ENCODE measurements at regions of chr12 and their contacts with region 1.

Region 1: GRCh38 chr12:122752464-122753318 is at the start of gene DENR:
- DNase-seq: peak; percentile 93
- ATAC-seq: peak; percentile 92
- H3K4me3 ChIP-seq: peak within 1 kb of the TSS; percentile 67 to 89 (median 86)
- H3K27ac ChIP-seq: peak within 1 kb of the TSS; percentile 65
- H3K4me1 ChIP-seq: peaks cover 44% of the 10 kb centered on the region
- H3K27me3 ChIP-seq: no peaks in the 10 kb centered on the region; a peak in 1 of 5 replicates
- CTCF ChIP-seq: peak; percentile 99
- EP300 ChIP-seq: no peak
- POLR2A ChIP-seq: peak; percentile 84 to 92
- RAD21 ChIP-seq: peak; percentile 99
- total RNA-seq, gene DENR: 59.1 and 78.9 TPM in 2 replicates

Region 2: GRCh38 chr12:122090759-122091515 is 661.8 kb before region 1 on chr12:
- CTCF ChIA-PET with region 1: no interaction called
- POLR2A ChIA-PET with region 1: no interaction called
- in situ Hi-C with region 1: no loop called
- intact Hi-C with region 1: no loop called
- DNase-seq: no peak
- ATAC-seq: no peak
- H3K4me3 ChIP-seq: no peak overlapping the region
- H3K27ac ChIP-seq: no peak overlapping the region
- H3K4me1 ChIP-seq: peaks cover 26% of the 10 kb centered on the region
- H3K27me3 ChIP-seq: no peaks in the 10 kb centered on the region
- CTCF ChIP-seq: no peak
- EP300 ChIP-seq: no peak
- POLR2A ChIP-seq: no peak
- RAD21 ChIP-seq: no peak

Region 3: GRCh38 chr12:122526683-122527477 is 225.8 kb before region 1 on chr12 and contains the starts of genes KNTC1 and RSRC2:
- CTCF ChIA-PET with region 1: no interaction called
- POLR2A ChIA-PET with region 1: interaction called, 4 read pairs
- in situ Hi-C with region 1: no loop called
- intact Hi-C with region 1: loop called (anchors 10 kb)
- DNase-seq: peak; percentile 99
- ATAC-seq: peak; percentile 92
- H3K4me3 ChIP-seq: peak within 1 kb of the TSS; percentile 75 to 96 (median 89)
- H3K27ac ChIP-seq: peak within 1 kb of the TSS; percentile 100
- H3K4me1 ChIP-seq: peaks cover 31% of the 10 kb centered on the region
- H3K27me3 ChIP-seq: no peaks in the 10 kb centered on the region; a peak in 1 of 5 replicates
- CTCF ChIP-seq: no peak
- EP300 ChIP-seq: peak; percentile 8 to 34
- POLR2A ChIP-seq: peak; percentile 81 to 99
- RAD21 ChIP-seq: peak; percentile 16; the same call in 1 of the 2 replicates
- total RNA-seq, gene KNTC1: 49.2 and 57.6 TPM in 2 replicates
- total RNA-seq, gene RSRC2: 77.8 and 85.8 TPM in 2 replicates

Region 4: DNA sequence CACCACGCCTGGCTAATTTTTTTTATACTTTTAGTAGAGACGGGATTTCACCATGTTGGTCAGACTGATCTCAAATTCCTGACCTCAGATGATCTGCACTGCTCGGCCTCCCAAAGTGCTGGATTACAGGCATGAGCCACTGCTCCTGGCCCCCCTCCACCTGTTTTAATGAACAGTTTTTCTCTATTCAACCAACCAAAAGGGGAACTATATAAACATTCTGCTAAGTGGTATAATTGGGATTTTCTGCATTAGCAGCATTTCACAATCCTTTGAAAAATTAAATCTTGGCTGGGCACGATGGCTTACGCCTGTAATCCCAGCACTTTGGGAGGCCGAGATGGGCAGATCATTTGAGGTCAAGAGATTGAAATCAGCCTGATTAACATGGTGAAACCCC is 180.9 kb before region 1 on chr12:
- CTCF ChIA-PET with region 1: no interaction called
- POLR2A ChIA-PET with region 1: no interaction called
- in situ Hi-C with region 1: no loop called
- intact Hi-C with region 1: no loop called
- DNase-seq: no peak
- ATAC-seq: no peak
- H3K4me3 ChIP-seq: no peak overlapping the region
- H3K27ac ChIP-seq: no peak overlapping the region
- H3K4me1 ChIP-seq: no peaks in the 10 kb centered on the region
- H3K27me3 ChIP-seq: no peaks in the 10 kb centered on the region
- CTCF ChIP-seq: no peak
- EP300 ChIP-seq: no peak
- POLR2A ChIP-seq: no peak
- RAD21 ChIP-seq: no peak

Region 5: GRCh38 chr12:122635471-122635870 is 117.2 kb before region 1 on chr12:
- CTCF ChIA-PET with region 1: interaction called, 43 read pairs
- POLR2A ChIA-PET with region 1: interaction called, 5 read pairs
- in situ Hi-C with region 1: loop called (anchors 5 kb)
- intact Hi-C with region 1: loop called (anchors 1 kb)
- DNase-seq: no peak
- ATAC-seq: no peak
- H3K4me3 ChIP-seq: no peak overlapping the region
- H3K27ac ChIP-seq: no peak overlapping the region
- H3K4me1 ChIP-seq: no peaks in the 10 kb centered on the region
- H3K27me3 ChIP-seq: no peaks in the 10 kb centered on the region
- CTCF ChIP-seq: no peak
- EP300 ChIP-seq: no peak
- POLR2A ChIP-seq: no peak
- RAD21 ChIP-seq: no peak

Region 6: DNA sequence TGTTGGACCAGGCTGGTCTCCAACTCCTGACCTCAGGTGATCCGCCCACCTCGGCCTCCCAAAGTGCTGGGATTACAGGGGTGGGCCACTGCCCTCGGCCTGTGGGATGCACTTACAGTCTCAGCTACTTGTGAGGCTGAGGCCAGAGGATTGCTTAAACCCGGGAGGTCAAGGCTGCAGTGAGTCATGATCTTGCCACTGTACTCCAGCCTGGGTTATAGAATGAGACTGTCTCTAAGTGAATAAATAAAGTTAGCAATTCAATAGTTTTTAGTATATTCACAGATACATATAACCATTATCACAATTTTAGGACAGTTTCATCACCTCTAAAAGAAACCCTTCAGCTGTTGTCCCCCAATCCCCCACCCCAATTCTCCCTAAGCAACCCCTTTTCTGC is 110.7 kb before region 1 on chr12:
- CTCF ChIA-PET with region 1: interaction called, 43 read pairs
- POLR2A ChIA-PET with region 1: interaction called, 5 read pairs
- in situ Hi-C with region 1: loop called (anchors 5 kb)
- intact Hi-C with region 1: loop called (anchors 1 kb)
- DNase-seq: no peak
- ATAC-seq: no peak
- H3K4me3 ChIP-seq: no peak overlapping the region
- H3K27ac ChIP-seq: no peak overlapping the region
- H3K4me1 ChIP-seq: peaks cover 10% of the 10 kb centered on the region
- H3K27me3 ChIP-seq: no peaks in the 10 kb centered on the region
- CTCF ChIP-seq: no peak
- EP300 ChIP-seq: no peak
- POLR2A ChIP-seq: no peak
- RAD21 ChIP-seq: no peak

Region 7: GRCh38 chr12:122681814-122682213 is 70.9 kb before region 1 on chr12:
- CTCF ChIA-PET with region 1: no interaction called
- POLR2A ChIA-PET with region 1: interaction called, 3 read pairs
- in situ Hi-C with region 1: no loop called
- intact Hi-C with region 1: loop called (anchors 2 kb)
- DNase-seq: no peak
- ATAC-seq: peak; percentile 8; the same call in 2 of the 3 replicates
- H3K4me3 ChIP-seq: peak overlapping the region in 1 of 3 experiments; percentile 25; a peak in 1 of 6 replicates
- H3K27ac ChIP-seq: no peak overlapping the region
- H3K4me1 ChIP-seq: peaks cover 71% of the 10 kb centered on the region
- H3K27me3 ChIP-seq: no peaks in the 10 kb centered on the region; a peak in 1 of 5 replicates
- CTCF ChIP-seq: no peak
- EP300 ChIP-seq: no peak
- POLR2A ChIP-seq: no peak
- RAD21 ChIP-seq: no peak

Region 8: DNA sequence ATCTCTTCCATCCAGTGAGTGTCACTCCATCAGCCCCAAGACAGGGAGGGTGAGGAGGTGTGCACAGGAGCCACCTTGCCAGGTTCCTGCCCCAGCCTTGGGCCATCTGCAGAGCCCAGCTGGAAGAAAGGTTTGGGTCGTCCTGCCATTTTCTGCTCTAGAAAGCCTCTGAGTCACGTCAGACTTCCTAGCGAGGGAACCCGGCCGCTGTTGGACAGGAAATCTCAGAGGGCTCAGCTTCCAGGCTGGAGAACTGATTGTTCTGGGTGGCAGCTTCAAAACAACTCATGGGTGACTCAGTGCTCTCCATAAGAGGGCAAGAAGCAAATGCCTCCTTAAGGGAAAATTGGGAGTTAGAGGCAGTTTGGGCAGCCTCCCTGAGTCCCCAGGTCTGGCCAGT is 99.1 kb after region 1 on chr12:
- CTCF ChIA-PET with region 1: no interaction called
- POLR2A ChIA-PET with region 1: no interaction called
- in situ Hi-C with region 1: no loop called
- intact Hi-C with region 1: no loop called
- DNase-seq: no peak
- ATAC-seq: no peak
- H3K4me3 ChIP-seq: no peak overlapping the region
- H3K27ac ChIP-seq: no peak overlapping the region
- H3K4me1 ChIP-seq: no peaks in the 10 kb centered on the region
- H3K27me3 ChIP-seq: no peaks in the 10 kb centered on the region
- CTCF ChIP-seq: no peak
- EP300 ChIP-seq: no peak
- POLR2A ChIP-seq: no peak
- RAD21 ChIP-seq: no peak

Measured in HepG2 (cell line).